ENCODE measurements at regions of chr5 and their contacts with region 1.

Region 1: DNA sequence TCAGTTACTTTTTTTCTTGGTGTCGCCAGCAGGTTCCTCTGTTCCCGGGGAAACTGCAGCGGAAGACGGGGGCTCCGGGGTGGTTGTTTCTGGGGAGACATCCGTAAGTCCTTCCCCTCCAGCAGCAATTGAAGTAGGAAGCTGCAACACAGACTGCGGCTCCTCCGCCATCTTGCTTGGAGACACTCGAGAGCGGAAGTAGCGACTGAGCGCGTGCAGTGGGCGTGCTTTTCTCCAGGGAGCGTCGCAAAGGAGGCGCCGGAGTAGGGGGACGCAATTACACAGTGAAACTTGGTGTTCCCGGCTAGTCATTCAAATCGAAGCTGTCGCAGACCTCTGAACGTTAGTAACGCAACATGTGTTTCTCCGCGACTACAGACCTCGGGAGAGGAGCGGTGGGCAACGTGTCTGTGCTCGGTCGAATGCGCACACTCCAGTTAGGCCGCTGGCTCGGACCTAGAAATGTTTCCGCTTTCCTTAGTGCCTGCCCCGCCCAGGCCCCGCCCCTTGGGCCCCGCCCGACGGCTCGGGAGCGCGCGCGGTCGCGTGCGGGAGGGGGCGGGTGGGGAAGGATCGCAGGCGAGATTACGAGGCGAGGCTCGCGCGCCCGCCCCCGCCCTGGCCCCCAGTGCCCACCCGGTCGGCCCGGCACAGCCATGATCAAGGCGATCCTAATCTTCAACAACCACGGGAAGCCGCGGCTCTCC is at the starts of genes AP3S1 and ATG12:
- DNase-seq: peak; percentile 79 to 96 (median 89)
- ATAC-seq: peak; percentile 89
- H3K4me3 ChIP-seq: peak within 1 kb of the TSS; percentile 71
- H3K4me3 Mint-ChIP-seq: peak within 1 kb of the TSS; percentile 99
- H3K27ac ChIP-seq: peak within 1 kb of the TSS; percentile 85 to 97
- H3K27ac Mint-ChIP-seq: peak within 1 kb of the TSS; percentile 97
- H3K4me1 ChIP-seq: peaks cover 25% of the 10 kb centered on the region
- H3K4me1 Mint-ChIP-seq: peaks cover 76% of the 10 kb centered on the region
- H3K27me3 ChIP-seq: no peaks in the 10 kb centered on the region
- H3K27me3 Mint-ChIP-seq: no peaks in the 10 kb centered on the region
- CTCF ChIP-seq: no peak
- total RNA-seq, gene AP3S1: 33.2 to 33.6 TPM
- total RNA-seq, gene ATG12: 61.0 to 62.2 TPM

Region 2: DNA sequence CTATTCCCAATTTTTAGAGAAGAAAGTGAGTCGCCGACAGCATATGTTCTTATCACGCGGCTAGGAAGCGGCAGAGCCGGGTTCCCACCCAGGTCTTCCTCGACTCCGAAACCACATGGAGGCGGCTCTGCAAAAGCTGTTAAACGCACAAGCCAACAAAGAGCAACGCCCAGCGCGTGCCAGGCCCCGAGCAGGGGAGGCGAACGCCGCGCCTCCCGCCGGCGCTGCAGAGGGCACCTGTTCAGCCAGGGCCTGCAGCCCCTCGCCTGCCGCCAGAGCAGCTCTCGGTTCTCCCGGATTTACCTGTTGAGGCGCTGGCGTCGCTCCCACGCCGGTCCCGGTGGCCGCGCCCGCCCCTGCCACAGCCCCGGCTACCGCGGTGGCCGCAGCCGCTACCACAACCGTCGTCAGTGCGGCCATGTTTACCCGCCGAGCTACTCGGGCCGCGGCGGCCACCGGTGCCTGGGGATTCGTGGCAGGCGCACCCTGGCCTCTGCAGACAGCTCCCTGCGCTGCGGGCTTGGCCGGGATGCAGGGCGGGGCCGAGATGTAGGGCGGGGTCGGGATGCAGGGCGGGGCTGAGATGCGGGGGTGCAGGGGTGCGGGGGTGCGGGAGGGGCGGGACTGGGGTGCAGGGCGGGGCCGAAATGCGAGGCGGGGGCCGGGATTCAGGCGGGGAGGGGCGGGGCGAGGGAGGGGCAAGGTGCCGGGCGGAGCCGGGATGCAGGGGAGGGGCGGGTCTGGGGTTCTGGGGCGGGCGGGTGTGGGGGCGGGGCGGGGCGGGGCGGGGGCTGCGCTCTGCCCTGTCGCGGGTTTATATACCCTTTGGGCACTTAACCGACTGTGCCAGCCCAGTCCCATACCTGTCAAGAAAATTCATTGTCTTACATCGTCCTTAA is 545.2 kb before region 1 on chr5 and contains the start of gene CCDC112:
- CTCF ChIA-PET with region 1: no interaction called
- POLR2A ChIA-PET with region 1: interaction called, 6 read pairs
- intact Hi-C with region 1: loop called in 1 of 2 experiments (anchors 5 kb)
- DNase-seq: peak; percentile 57 to 92 (median 76)
- ATAC-seq: peak; percentile 77
- H3K4me3 ChIP-seq: peak within 1 kb of the TSS; percentile 55
- H3K4me3 Mint-ChIP-seq: peak within 1 kb of the TSS; percentile 87
- H3K27ac ChIP-seq: no peak within 1 kb of the TSS
- H3K27ac Mint-ChIP-seq: peak within 1 kb of the TSS; percentile 10
- H3K4me1 ChIP-seq: peaks cover 12% of the 10 kb centered on the region
- H3K4me1 Mint-ChIP-seq: peaks cover 11% of the 10 kb centered on the region
- H3K27me3 ChIP-seq: no peaks in the 10 kb centered on the region
- H3K27me3 Mint-ChIP-seq: no peaks in the 10 kb centered on the region
- CTCF ChIP-seq: no peak
- total RNA-seq, gene CCDC112: 3.1 to 3.9 TPM

Region 3: GRCh38 chr5:115625579-115626444 is 215.7 kb before region 1 on chr5 and contains the start of gene TMED7:
- CTCF ChIA-PET with region 1: interaction called, 9 read pairs
- POLR2A ChIA-PET with region 1: interaction called, 9 read pairs
- intact Hi-C with region 1: loop called (anchors 2 kb)
- DNase-seq: peak; percentile 98 to 100 (median 100)
- ATAC-seq: peak; percentile 88
- H3K4me3 ChIP-seq: peak within 1 kb of the TSS; percentile 82
- H3K4me3 Mint-ChIP-seq: no peak within 1 kb of the TSS
- H3K27ac ChIP-seq: peak within 1 kb of the TSS; percentile 86 to 91
- H3K27ac Mint-ChIP-seq: no peak within 1 kb of the TSS
- H3K4me1 ChIP-seq: peaks cover 24% of the 10 kb centered on the region
- H3K4me1 Mint-ChIP-seq: peaks cover 19% of the 10 kb centered on the region
- H3K27me3 ChIP-seq: no peaks in the 10 kb centered on the region
- H3K27me3 Mint-ChIP-seq: no peaks in the 10 kb centered on the region
- CTCF ChIP-seq: no peak
- total RNA-seq, gene TMED7: 50.4 to 56.7 TPM

Region 4: DNA sequence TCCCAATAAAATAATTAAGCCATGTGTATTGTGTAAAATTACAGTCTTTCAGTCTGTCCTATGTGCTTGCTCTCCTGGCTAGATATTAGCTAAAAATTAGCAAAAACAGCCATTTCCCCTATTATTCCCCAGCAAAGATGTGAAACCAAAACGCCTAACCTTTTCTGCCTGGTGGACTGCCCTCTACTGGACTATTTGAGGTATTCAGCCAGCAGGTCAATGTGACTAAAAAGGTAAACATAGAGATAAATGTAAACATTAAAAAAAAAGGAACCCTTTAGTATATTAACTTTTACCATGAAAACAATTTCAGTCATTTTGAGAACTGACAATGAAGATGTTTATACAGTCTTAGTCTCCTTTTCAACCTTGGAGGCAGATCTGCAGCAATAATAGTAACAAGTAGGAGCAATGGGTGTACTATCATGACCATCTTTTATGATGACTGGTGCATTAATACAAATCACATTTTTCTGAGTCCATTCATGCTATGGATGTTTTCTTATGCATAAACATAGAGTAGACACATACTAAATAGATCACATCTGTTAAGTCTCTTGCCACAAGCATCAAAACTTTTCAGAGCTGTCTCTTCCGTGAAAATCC is 10.3 kb before region 1 on chr5:
- CTCF ChIA-PET with region 1: interaction called, 10 read pairs
- POLR2A ChIA-PET with region 1: interaction called, 3 read pairs
- intact Hi-C with region 1: no loop called
- DNase-seq: peak in 4 of 14 experiments; percentile 28 to 68 (median 62)
- ATAC-seq: peak; percentile 79
- H3K4me3 ChIP-seq: no peak overlapping the region
- H3K4me3 Mint-ChIP-seq: no peak overlapping the region
- H3K27ac ChIP-seq: no peak overlapping the region
- H3K27ac Mint-ChIP-seq: peak overlapping the region; percentile 6
- H3K4me1 ChIP-seq: no peaks in the 10 kb centered on the region
- H3K4me1 Mint-ChIP-seq: peaks cover 9% of the 10 kb centered on the region
- H3K27me3 ChIP-seq: no peaks in the 10 kb centered on the region
- H3K27me3 Mint-ChIP-seq: no peaks in the 10 kb centered on the region
- CTCF ChIP-seq: peak; percentile 80

Region 5: DNA sequence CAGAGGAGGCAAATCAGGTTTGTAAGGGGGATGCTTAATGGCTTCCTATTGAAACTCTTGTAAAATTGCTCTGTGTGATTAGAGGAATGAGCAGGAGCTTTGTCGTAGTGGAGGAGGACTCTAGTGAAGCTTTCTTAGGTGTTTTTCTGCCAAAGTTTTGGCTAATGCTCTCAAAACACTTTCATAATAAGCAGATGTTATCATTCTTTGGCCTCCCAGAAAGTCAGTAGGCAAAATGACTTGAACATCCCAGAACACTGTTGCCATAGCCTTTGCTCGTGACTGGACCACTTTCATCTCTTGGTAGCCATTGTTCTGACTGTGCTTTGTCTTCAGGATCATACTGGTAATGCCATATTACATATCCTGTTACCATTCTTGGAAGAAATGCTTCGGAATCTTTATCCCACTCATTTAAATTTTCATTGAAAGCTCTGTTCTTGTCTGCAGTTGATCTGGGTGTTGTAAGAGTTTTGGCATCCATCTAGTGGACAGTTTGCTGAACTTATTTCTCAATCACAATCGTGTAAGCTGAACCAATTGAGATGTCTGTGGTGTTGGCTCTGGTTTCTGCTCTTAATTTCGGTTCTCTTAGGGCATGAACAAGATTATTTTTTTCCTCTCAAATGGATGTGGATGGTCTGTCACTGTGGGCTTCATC is 430.9 kb after region 1 on chr5:
- CTCF ChIA-PET with region 1: no interaction called
- POLR2A ChIA-PET with region 1: no interaction called
- intact Hi-C with region 1: no loop called
- DNase-seq: no peak
- ATAC-seq: no peak
- H3K4me3 ChIP-seq: no peak overlapping the region
- H3K4me3 Mint-ChIP-seq: no peak overlapping the region
- H3K27ac ChIP-seq: no peak overlapping the region
- H3K27ac Mint-ChIP-seq: no peak overlapping the region
- H3K4me1 ChIP-seq: no peaks in the 10 kb centered on the region
- H3K4me1 Mint-ChIP-seq: no peaks in the 10 kb centered on the region
- H3K27me3 ChIP-seq: no peaks in the 10 kb centered on the region
- H3K27me3 Mint-ChIP-seq: no peaks in the 10 kb centered on the region
- CTCF ChIP-seq: no peak

Region 6: GRCh38 chr5:117405197-117405596 is 1563.7 kb after region 1 on chr5:
- CTCF ChIA-PET with region 1: no interaction called
- POLR2A ChIA-PET with region 1: no interaction called
- intact Hi-C with region 1: no loop called
- DNase-seq: no peak
- ATAC-seq: no peak
- H3K4me3 ChIP-seq: no peak overlapping the region
- H3K4me3 Mint-ChIP-seq: no peak overlapping the region
- H3K27ac ChIP-seq: no peak overlapping the region
- H3K27ac Mint-ChIP-seq: no peak overlapping the region
- H3K4me1 ChIP-seq: no peaks in the 10 kb centered on the region
- H3K4me1 Mint-ChIP-seq: no peaks in the 10 kb centered on the region
- H3K27me3 ChIP-seq: no peaks in the 10 kb centered on the region
- H3K27me3 Mint-ChIP-seq: no peaks in the 10 kb centered on the region
- CTCF ChIP-seq: no peak